Activated CD4-positive, alpha-beta T cell treated with anti-CD3 and anti-CD28 coated beads, Interleukin-2, amount 10 ng/mL, durations not matched to agents 7 days and 5 days (primary cell): ENCODE measurements at regions of chr17 and their contacts with region 1.

Region 1: GRCh38 chr17:45277216-45277849 is 15.4 kb upstream of the SPATA32 start:
- DNase-seq: peak; percentile 93
- H3K4me3 Mint-ChIP-seq: no peak overlapping the region
- H3K27ac Mint-ChIP-seq: peak overlapping the region; percentile 11
- H3K4me1 Mint-ChIP-seq: peaks cover 22% of the 10 kb centered on the region
- H3K27me3 Mint-ChIP-seq: no peaks in the 10 kb centered on the region

Region 2: GRCh38 chr17:45291171-45291805 is 14.0 kb after region 1 on chr17:
- CTCF ChIA-PET with region 1: interaction called, 24 read pairs
- POLR2A ChIA-PET with region 1: no interaction called
- DNase-seq: no peak
- H3K4me3 Mint-ChIP-seq: no peak overlapping the region
- H3K27ac Mint-ChIP-seq: peak overlapping the region; percentile 67
- H3K4me1 Mint-ChIP-seq: peaks cover 61% of the 10 kb centered on the region
- H3K27me3 Mint-ChIP-seq: no peaks in the 10 kb centered on the region

Region 3: DNA sequence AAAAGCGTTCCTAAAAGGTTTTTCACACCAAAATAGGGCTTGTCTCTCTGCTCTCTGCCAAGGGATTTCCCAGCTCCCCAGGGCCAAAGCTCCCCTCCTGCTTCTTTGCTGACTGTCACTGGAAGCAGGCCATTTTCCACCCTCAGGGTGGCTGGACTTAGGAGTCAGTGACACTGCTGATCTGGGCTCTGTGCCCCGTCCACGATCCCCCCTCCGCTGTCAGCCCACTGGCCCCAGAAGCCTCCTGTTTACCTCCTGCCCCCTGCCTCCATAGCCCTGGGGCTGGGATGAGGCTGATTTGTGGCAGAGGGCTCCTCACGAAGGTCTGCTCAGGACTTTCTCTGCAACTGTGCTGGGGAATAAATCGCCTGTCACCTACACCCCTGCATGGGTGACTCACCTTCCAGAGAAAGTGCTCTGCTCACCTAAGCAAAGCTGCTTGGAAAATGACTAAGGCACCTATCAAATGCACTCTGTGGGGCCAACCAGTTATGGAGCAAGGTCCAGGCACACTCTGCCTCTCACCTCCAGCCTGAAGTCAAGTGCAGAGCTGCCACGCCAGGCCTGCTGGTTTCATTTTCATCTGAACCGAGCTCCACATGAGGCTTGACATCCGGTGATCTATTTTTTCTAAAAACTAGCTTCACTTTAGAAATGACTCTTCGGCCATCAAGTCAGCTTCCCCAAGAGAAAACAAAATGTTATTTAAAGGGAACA is 34.6 kb after region 1 on chr17:
- CTCF ChIA-PET with region 1: interaction called, 15 read pairs
- POLR2A ChIA-PET with region 1: no interaction called
- DNase-seq: peak; percentile 87
- H3K4me3 Mint-ChIP-seq: peak overlapping the region; percentile 75
- H3K27ac Mint-ChIP-seq: peak overlapping the region; percentile 98
- H3K4me1 Mint-ChIP-seq: peaks cover 71% of the 10 kb centered on the region
- H3K27me3 Mint-ChIP-seq: no peaks in the 10 kb centered on the region

Region 4: DNA sequence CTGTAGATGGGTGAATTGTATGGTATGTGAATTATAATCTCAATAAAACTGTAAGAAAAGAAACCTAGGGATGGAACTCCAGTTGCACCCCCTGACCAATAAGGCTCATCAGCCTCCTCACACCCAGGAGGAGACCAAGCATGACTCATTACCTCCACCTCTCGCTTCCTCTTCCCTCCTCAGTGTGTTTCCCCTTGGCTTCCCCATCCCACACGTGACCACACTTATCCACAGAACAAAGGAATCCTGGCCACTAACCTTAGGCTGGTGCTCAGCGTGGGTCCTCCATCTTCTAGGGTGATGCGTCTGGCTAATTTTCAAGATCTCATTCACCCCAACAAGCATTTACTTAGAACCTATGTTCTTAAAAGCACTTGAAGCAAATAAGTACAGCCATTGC is 75.7 kb after region 1 on chr17:
- CTCF ChIA-PET with region 1: no interaction called
- POLR2A ChIA-PET with region 1: no interaction called
- DNase-seq: no peak
- H3K4me3 Mint-ChIP-seq: no peak overlapping the region
- H3K27ac Mint-ChIP-seq: no peak overlapping the region
- H3K4me1 Mint-ChIP-seq: peaks cover 8% of the 10 kb centered on the region
- H3K27me3 Mint-ChIP-seq: peaks cover 29% of the 10 kb centered on the region

Region 5: GRCh38 chr17:45385331-45385997 is 108.1 kb after region 1 on chr17:
- CTCF ChIA-PET with region 1: interaction called, 55 read pairs
- POLR2A ChIA-PET with region 1: no interaction called
- DNase-seq: peak; percentile 91
- H3K4me3 Mint-ChIP-seq: no peak overlapping the region
- H3K27ac Mint-ChIP-seq: peak overlapping the region; percentile 80
- H3K4me1 Mint-ChIP-seq: peaks cover 20% of the 10 kb centered on the region
- H3K27me3 Mint-ChIP-seq: peaks cover 14% of the 10 kb centered on the region